Activated naive CD4-positive, alpha-beta T cell treated with anti-CD3 and anti-CD28 coated beads for 36 hours (primary cell): ENCODE measurements at regions of chr16 and their contacts with region 1.

Region 1: GRCh38 chr16:50210266-50211038 is 55.9 kb upstream of the ADCY7 start:
- DNase-seq: peak; percentile 88
- H3K4me3 Mint-ChIP-seq: no peak overlapping the region
- H3K27ac Mint-ChIP-seq: peak overlapping the region; percentile 59
- H3K4me1 Mint-ChIP-seq: peaks cover 32% of the 10 kb centered on the region
- H3K27me3 Mint-ChIP-seq: no peaks in the 10 kb centered on the region

Region 2: DNA sequence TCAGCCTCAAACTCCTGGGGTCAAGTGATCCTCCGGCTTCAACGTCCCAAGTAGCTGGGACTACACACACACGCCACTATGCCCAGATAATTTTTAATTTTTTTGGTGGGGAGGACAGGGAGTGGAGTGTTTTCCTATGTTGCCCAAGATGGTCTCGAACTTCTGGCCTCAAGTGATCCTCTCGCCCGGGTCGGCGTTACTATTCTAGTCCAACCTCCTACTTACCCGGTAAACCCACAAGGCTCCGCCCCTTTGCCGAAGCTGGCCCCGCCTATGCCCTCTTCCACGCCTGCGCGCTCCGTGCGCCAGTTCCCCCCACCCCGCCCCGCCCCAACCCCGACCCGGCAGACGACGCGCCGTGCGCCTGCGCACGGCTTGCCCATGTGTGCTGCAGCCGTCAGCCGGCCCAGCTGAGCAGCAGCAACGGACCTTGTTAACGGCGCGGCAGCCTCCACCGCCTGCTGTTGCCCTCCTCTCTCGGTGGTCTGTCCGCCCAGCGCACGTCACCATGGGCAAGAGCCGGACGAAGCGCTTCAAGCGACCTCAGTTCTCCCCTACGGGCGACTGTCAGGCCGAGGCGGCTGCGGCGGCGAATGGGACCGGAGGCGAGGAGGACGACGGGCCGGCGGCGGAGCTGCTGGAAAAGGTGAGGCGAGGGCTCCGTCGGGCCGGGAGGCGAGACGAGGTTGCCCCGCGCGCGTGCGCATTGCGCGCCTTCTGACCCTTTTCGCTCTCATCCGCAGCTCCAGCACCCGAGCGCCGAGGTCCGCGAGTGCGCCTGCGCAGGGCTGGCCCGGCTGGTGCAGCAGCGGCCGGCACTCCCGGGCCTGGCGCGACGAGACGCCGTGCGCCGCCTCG is 144.6 kb before region 1 on chr16 and contains the start of gene HEATR3:
- CTCF ChIA-PET with region 1: interaction called, 52 read pairs
- intact Hi-C with region 1: loop called (anchors 1 kb)
- DNase-seq: peak; percentile 96
- H3K4me3 Mint-ChIP-seq: peak within 1 kb of the TSS; percentile 86
- H3K27ac Mint-ChIP-seq: peak within 1 kb of the TSS; percentile 81
- H3K4me1 Mint-ChIP-seq: peaks cover 27% of the 10 kb centered on the region
- H3K27me3 Mint-ChIP-seq: no peaks in the 10 kb centered on the region
- total RNA-seq, gene HEATR3: 16.3 to 17.5 TPM

Region 3: DNA sequence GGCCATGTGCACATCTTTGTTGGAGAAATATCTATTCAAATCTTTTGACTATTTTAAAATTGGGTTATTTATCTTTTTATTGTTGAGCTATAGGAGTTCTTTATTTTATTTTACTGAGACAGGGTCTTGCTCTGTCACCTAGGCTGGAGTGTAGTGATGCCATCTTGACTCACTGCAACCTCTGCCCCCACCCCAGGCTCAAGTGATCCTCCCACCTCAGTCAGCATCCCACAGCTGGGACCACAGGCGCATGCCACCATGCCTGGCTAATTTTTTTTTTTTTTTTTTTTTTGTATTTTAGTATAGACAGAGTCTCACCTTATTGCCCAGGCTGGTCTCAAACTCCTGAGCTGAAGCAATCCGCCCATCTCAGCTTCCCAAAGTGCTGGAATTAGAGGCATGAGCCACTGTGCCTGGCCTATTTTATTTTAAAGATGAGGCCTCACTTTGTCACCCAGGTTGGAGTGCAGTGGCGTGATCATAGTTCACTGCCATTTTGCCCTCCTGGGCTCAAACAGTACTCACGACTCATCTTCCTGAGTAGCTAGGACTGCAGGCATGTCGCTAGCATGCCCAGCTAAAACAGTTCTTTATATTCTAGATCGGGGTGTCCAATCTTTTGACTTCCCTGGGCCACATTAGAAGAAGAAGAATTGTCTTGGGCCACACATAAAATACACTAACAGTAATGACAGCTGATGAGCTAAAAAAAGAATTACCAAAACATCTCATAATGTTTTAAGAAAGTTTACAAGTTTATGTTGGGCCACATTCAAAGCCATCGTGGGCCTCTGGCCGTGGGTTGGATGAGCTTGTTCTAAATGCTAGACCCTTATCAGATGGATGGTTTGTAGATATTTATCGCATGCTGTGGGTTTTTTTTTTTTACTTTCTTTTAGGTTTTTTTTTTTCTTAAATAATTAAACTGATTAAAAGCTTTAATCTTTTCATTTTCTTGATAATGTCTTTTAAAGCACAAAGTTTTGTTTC is 43.6 kb before region 1 on chr16:
- CTCF ChIA-PET with region 1: interaction called, 15 read pairs
- intact Hi-C with region 1: no loop called
- DNase-seq: peak; percentile 50
- H3K4me3 Mint-ChIP-seq: peak overlapping the region; percentile 23
- H3K27ac Mint-ChIP-seq: peak overlapping the region; percentile 71
- H3K4me1 Mint-ChIP-seq: peaks cover 66% of the 10 kb centered on the region
- H3K27me3 Mint-ChIP-seq: no peaks in the 10 kb centered on the region

Region 4: GRCh38 chr16:50354629-50355456 is 144.4 kb after region 1 on chr16:
- CTCF ChIA-PET with region 1: interaction called, 43 read pairs
- intact Hi-C with region 1: loop called (anchors 1 kb)
- DNase-seq: no peak
- H3K4me3 Mint-ChIP-seq: no peak overlapping the region
- H3K27ac Mint-ChIP-seq: no peak overlapping the region
- H3K4me1 Mint-ChIP-seq: peaks cover 25% of the 10 kb centered on the region
- H3K27me3 Mint-ChIP-seq: no peaks in the 10 kb centered on the region

Region 5: GRCh38 chr16:50548125-50548908 is 337.9 kb after region 1 on chr16 and contains the start of gene NKD1:
- CTCF ChIA-PET with region 1: no interaction called
- intact Hi-C with region 1: loop called (anchors 5 kb)
- DNase-seq: peak; percentile 68
- H3K4me3 Mint-ChIP-seq: peak within 1 kb of the TSS; percentile 85
- H3K27ac Mint-ChIP-seq: no peak within 1 kb of the TSS
- H3K4me1 Mint-ChIP-seq: peaks cover 18% of the 10 kb centered on the region
- H3K27me3 Mint-ChIP-seq: no peaks in the 10 kb centered on the region
- total RNA-seq, gene NKD1: 2.6 to 3.2 TPM